ENCODE measurements at regions of chr2 and their contacts with region 1.

Region 1: GRCh38 chr2:211216221-211216620 is 659.8 kb downstream of the CPS1 start:
- DNase-seq: peak in 1 of 2 experiments; percentile 22
- H3K4me3 ChIP-seq: no peak overlapping the region
- H3K4me3 Mint-ChIP-seq: no peak overlapping the region
- H3K27ac Mint-ChIP-seq: no peak overlapping the region
- H3K4me1 ChIP-seq: no peaks in the 10 kb centered on the region
- H3K4me1 Mint-ChIP-seq: no peaks in the 10 kb centered on the region
- H3K27me3 ChIP-seq: no peaks in the 10 kb centered on the region
- H3K27me3 Mint-ChIP-seq: peaks cover 5% of the 10 kb centered on the region
- CTCF ChIP-seq: peak; percentile 38 to 42

Region 2: GRCh38 chr2:211281430-211282073 is 65.3 kb after region 1 on chr2:
- CTCF ChIA-PET with region 1: interaction called, 6 read pairs
- POLR2A ChIA-PET with region 1: no interaction called
- intact Hi-C with region 1: loop called (anchors 1 kb)
- DNase-seq: peak; percentile 48 to 59
- H3K4me3 ChIP-seq: no peak overlapping the region
- H3K4me3 Mint-ChIP-seq: no peak overlapping the region
- H3K27ac Mint-ChIP-seq: no peak overlapping the region
- H3K4me1 ChIP-seq: peaks cover 15% of the 10 kb centered on the region
- H3K4me1 Mint-ChIP-seq: peaks cover 13% of the 10 kb centered on the region
- H3K27me3 ChIP-seq: no peaks in the 10 kb centered on the region
- H3K27me3 Mint-ChIP-seq: no peaks in the 10 kb centered on the region
- CTCF ChIP-seq: peak in 1 of 2 experiments; percentile 29

Region 3: DNA sequence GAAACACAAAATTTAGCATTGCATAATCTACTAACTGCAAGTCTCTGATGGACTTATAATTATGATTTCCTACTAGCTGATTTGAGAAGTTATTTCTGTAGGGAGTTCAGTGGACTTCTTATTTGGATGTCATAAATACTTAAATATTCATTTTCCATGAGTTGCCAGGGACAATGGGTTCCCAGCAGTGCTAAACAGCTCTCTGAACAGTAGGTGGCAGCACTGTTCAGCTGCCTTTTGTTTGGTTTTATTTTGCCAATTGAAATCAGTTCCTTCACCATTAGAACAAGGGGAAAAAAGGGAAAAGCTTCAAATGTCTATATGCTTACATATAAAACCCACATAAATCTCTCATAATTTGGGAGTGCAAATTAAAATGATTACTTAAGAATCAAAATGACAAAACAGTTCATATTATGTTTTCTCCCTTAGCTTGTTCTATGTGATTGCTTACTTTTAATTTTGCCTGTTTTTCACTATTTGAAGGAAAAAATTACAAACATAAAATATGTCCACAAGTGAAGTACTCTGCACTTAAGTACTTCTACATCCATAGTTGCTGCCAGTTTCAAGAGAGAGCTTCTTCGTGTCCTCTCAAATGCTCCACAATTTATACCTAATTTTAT is 239.1 kb after region 1 on chr2:
- CTCF ChIA-PET with region 1: no interaction called
- POLR2A ChIA-PET with region 1: no interaction called
- intact Hi-C with region 1: loop called (anchors 10 kb)
- DNase-seq: peak; percentile 37 to 38
- H3K4me3 ChIP-seq: no peak overlapping the region
- H3K4me3 Mint-ChIP-seq: no peak overlapping the region
- H3K27ac Mint-ChIP-seq: no peak overlapping the region
- H3K4me1 ChIP-seq: no peaks in the 10 kb centered on the region
- H3K4me1 Mint-ChIP-seq: no peaks in the 10 kb centered on the region
- H3K27me3 ChIP-seq: no peaks in the 10 kb centered on the region; the same call in 1 of the 2 replicates
- H3K27me3 Mint-ChIP-seq: peaks cover 6% of the 10 kb centered on the region
- CTCF ChIP-seq: peak; percentile 71 to 93

Measured in Caco-2 (cell line).